Activated CD4-positive, alpha-beta T cell treated with anti-CD3 and anti-CD28 coated beads for 36 hours (primary cell): ENCODE measurements at regions of chrX and their contacts with region 1.

Region 1: GRCh38 chrX:149715468-149715867 is 3.6 kb downstream of the MAGEA11 start:
- DNase-seq: no peak
- ATAC-seq: no peak
- H3K4me3 Mint-ChIP-seq: no peak overlapping the region
- H3K27ac Mint-ChIP-seq: no peak overlapping the region
- H3K4me1 Mint-ChIP-seq: no peaks in the 10 kb centered on the region
- H3K27me3 Mint-ChIP-seq: no peaks in the 10 kb centered on the region

Region 2: GRCh38 chrX:149495573-149496071 is 219.8 kb before region 1 on chrX:
- CTCF ChIA-PET with region 1: no interaction called
- POLR2A ChIA-PET with region 1: no interaction called
- intact Hi-C with region 1: no loop called
- DNase-seq: no peak
- ATAC-seq: no peak
- H3K4me3 Mint-ChIP-seq: no peak overlapping the region
- H3K27ac Mint-ChIP-seq: no peak overlapping the region
- H3K4me1 Mint-ChIP-seq: peaks cover 13% of the 10 kb centered on the region
- H3K27me3 Mint-ChIP-seq: no peaks in the 10 kb centered on the region

Region 3: DNA sequence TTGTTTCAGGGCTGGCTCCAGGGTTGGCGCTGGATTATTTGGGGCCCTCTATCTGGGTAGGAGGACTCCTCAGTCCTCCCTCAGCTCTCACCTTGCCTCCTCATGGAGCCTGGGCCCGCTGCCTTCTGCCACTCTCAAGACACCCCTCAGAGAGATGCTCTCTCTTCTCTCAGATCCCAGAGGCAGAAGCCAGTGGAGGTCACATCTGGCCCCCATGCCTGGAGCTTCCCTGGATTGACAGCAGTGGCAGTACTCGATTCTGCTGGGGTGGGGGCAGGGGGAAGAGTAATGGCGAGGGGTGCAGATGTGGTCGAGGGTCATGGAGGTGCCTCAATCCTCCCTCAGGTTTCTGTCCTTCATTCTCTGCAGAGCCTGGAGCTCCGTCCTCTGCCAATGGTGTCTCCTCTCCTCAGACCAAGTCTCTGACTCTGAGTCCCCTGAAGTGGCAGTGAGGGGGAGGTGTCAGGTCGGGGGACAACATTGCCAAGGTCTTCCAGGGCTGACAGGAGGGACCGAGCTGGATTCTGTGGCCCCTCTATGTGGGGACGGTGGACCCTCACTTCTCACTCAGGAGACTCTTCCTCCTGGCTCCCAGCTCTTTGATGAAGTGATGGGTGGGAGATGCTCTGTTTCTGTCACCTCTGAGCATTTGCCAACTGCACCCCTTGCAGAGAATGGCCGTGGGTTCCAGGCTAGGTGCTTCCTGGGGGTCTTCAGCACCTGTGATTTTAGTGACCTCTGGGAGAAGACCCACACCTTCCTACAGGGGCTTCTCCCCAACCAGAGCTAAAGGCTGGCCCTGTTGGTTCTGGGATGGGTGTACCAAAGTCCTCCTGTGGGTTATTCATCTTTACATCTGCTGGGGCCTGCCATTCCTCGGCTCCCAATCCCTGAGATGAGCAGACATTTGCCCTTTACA is 47.5 kb after region 1 on chrX:
- CTCF ChIA-PET with region 1: no interaction called
- POLR2A ChIA-PET with region 1: no interaction called
- intact Hi-C with region 1: loop called in 1 of 2 experiments (anchors 10 kb)
- DNase-seq: no peak
- ATAC-seq: no peak
- H3K4me3 Mint-ChIP-seq: no peak overlapping the region
- H3K27ac Mint-ChIP-seq: no peak overlapping the region
- H3K4me1 Mint-ChIP-seq: no peaks in the 10 kb centered on the region
- H3K27me3 Mint-ChIP-seq: no peaks in the 10 kb centered on the region